ENCODE measurements at regions of chr1 and their contacts with region 1.

Region 1: DNA sequence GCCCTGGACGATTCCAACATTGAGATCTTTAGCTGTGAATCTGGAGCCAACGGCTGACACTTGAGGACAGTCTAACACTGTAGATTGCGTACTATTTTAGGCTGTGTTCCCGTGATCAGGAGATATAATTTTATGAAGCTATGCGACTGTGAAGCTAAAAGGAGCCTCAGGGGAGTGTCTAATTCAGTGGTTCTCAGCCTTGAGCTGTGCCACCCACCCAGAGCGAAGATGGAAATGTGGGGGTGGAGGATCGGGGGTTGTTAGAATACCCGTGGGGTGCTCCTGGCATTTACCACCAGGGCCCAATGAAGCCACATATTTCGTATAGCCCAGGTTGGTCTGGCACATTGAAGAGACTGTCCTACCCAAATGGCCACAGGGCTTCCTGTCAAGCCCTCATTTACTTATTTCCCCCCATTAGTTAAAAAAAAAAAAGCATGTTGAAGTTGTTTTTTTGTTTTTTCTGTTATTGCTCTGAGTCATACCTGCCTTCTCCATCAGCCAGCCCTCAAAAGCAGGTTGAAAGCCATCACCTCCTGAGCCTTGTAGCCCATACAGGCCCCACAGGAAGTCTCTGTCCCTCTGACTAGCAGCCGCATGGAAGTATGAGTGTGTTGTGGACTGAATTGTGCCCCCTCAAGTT is 141.7 kb downstream of the GALNT2 start:
- DNase-seq: peak; percentile 74
- H3K4me3 Mint-ChIP-seq: peak overlapping the region; percentile 41
- H3K27ac Mint-ChIP-seq: peak overlapping the region; percentile 92
- H3K4me1 Mint-ChIP-seq: peaks cover 50% of the 10 kb centered on the region
- H3K27me3 Mint-ChIP-seq: no peaks in the 10 kb centered on the region

Region 2: GRCh38 chr1:230186003-230186863 is 22.5 kb before region 1 on chr1:
- CTCF ChIA-PET with region 1: no interaction called
- POLR2A ChIA-PET with region 1: interaction called, 3 read pairs
- intact Hi-C with region 1: loop called (anchors 1 kb)
- DNase-seq: peak; percentile 53
- H3K4me3 Mint-ChIP-seq: no peak overlapping the region
- H3K27ac Mint-ChIP-seq: no peak overlapping the region
- H3K4me1 Mint-ChIP-seq: peaks cover 33% of the 10 kb centered on the region
- H3K27me3 Mint-ChIP-seq: no peaks in the 10 kb centered on the region

Measured in activated CD4-positive, alpha-beta memory T cell treated with anti-CD3 and anti-CD28 coated beads for 36 hours (primary cell).